GM12878 (cell line): ENCODE measurements at regions of chr10 and their contacts with region 1.

Region 1: DNA sequence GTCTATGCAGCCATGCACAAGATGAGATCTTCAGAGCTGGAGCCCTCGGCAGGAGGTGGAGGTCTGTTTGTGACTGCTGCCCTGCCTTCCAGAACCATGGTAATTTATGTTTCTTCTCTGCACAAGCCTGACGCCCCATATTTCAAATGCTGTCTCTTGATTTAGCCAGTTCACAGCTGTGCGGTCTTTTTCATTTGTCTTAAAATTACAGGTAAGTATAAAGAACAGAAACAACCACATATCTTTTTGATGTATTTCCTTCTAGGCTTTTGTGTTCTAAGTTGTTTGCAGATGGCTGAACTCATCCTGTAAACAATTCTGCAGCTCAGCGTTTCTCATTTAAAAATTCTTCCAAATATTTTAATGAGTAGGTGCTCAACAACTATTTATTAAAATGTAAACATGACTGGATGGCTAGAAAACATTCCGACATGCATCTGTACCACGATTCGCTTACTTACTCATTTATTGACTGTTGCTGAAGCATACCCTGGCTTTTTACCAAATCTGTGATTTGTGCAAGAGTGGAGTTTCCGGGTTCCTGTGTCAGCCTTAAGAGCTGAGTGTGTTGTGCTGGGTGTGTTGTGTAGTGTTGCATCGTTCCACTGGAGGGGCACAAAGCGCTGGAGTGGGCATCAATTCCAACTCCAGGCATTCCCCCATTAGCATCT is 58.9 kb downstream of the PIP4K2A start:
- DNase-seq: no peak
- ATAC-seq: peak; percentile 38
- H3K4me3 ChIP-seq: no peak overlapping the region
- H3K27ac ChIP-seq: peak overlapping the region; percentile 17; the same call in 1 of the 2 replicates
- H3K4me1 ChIP-seq: peaks cover 66% of the 10 kb centered on the region
- H3K27me3 ChIP-seq: no peaks in the 10 kb centered on the region
- CTCF ChIP-seq: no peak
- EP300 ChIP-seq: no peak
- POLR2A ChIP-seq: no peak
- RAD21 ChIP-seq: peak; percentile 19; the same call in 1 of the 2 replicates

Region 2: DNA sequence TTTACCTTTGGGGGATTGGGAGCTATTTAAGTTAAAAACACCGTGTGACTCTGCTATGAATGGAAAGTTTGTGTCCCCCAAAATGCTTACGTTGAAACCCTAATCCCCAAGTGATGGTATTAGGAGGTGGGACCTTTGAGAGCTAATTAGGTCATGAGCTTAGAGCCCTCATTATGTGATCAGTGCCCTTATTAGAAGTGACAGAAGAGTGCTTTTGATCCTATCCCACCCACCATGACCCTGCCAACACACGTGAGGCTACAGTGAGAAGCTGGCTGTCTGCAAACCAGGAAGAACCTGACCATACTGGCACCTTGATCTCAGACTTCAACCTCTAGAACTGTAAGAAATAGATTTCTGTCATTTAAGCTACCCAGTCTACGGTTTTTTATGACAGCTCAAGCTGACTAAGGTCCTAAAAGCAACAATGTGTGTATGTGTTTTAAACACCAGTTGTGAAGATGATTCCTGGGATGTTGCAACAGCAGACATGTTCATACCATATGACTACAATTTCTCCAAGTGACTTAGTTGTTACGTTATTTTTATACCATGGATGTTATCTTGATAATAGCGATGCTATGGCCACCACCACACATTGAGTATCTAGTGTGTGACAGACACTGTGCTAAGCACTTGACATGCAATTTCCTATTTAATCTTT is 65.5 kb before region 1 on chr10:
- CTCF ChIA-PET with region 1: no interaction called
- POLR2A ChIA-PET with region 1: no interaction called
- RAD21 ChIA-PET with region 1: no interaction called
- SMC1A ChIA-PET with region 1: no interaction called
- in situ Hi-C with region 1: no loop called
- intact Hi-C with region 1: no loop called
- DNase-seq: no peak
- ATAC-seq: no peak
- H3K4me3 ChIP-seq: no peak overlapping the region
- H3K27ac ChIP-seq: no peak overlapping the region
- H3K4me1 ChIP-seq: no peaks in the 10 kb centered on the region
- H3K27me3 ChIP-seq: no peaks in the 10 kb centered on the region
- CTCF ChIP-seq: no peak
- EP300 ChIP-seq: no peak
- POLR2A ChIP-seq: no peak
- RAD21 ChIP-seq: no peak

Region 3: GRCh38 chr10:22676435-22676834 is 21.0 kb after region 1 on chr10:
- CTCF ChIA-PET with region 1: interaction called, 3 read pairs
- POLR2A ChIA-PET with region 1: interaction called, 5 read pairs
- RAD21 ChIA-PET with region 1: interaction called, 71 read pairs
- SMC1A ChIA-PET with region 1: interaction called, 36 read pairs
- in situ Hi-C with region 1: no loop called
- intact Hi-C with region 1: no loop called
- DNase-seq: no peak
- ATAC-seq: no peak; the same call in 2 of the 3 replicates
- H3K4me3 ChIP-seq: no peak overlapping the region
- H3K27ac ChIP-seq: no peak overlapping the region
- H3K4me1 ChIP-seq: peaks cover 8% of the 10 kb centered on the region
- H3K27me3 ChIP-seq: no peaks in the 10 kb centered on the region
- CTCF ChIP-seq: no peak
- EP300 ChIP-seq: no peak
- POLR2A ChIP-seq: no peak
- RAD21 ChIP-seq: no peak

Region 4: DNA sequence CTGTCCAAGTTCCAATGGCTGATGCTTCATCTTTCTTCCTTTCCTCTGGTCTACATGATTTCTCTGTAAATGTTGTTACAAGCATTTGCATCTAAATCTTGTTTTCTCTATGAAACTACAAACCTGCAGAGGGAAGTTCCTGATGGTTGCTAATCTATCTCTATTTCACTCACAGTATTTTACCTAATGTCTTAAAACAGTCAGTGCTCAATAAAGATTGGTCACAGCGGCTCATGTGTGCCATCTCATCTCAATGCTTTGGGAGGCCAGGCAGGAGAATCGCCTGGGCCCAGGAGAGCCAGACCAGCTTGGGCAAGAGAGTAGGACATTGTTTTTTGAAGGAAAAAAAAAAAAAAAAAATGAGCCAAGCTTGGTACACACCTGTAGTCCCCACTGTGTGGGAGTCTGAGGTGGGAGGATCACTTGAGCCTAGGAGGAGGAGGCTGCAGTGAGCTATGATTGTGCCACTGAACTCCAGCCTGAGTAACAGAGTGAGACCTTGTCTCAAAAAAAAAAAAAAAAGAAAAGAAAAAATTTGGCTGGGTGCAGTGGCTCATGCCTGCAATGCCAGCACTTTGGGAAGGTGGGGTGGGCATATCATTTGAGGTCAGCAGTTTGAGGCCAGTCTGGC is 201.1 kb after region 1 on chr10:
- CTCF ChIA-PET with region 1: no interaction called
- POLR2A ChIA-PET with region 1: no interaction called
- RAD21 ChIA-PET with region 1: no interaction called
- SMC1A ChIA-PET with region 1: no interaction called
- in situ Hi-C with region 1: no loop called
- intact Hi-C with region 1: no loop called
- DNase-seq: no peak
- ATAC-seq: peak; percentile 81
- H3K4me3 ChIP-seq: no peak overlapping the region
- H3K27ac ChIP-seq: no peak overlapping the region
- H3K4me1 ChIP-seq: no peaks in the 10 kb centered on the region
- H3K27me3 ChIP-seq: no peaks in the 10 kb centered on the region
- CTCF ChIP-seq: no peak
- EP300 ChIP-seq: no peak
- POLR2A ChIP-seq: no peak
- RAD21 ChIP-seq: no peak